HCT116 (cell line): ENCODE measurements at regions of chr3 and their contacts with region 1.

Region 1: GRCh38 chr3:113287803-113288648 is 76.7 kb downstream of the BOC start:
- DNase-seq: peak; percentile 57
- ATAC-seq: peak; percentile 66
- H3K4me3 ChIP-seq: no peak overlapping the region
- H3K27ac ChIP-seq: no peak overlapping the region
- H3K4me1 ChIP-seq: peaks cover 8 to 11% of the 10 kb centered on the region in 2 experiments; a peak in 3 of 4 replicates
- H3K27me3 ChIP-seq: no peaks in the 10 kb centered on the region
- CTCF ChIP-seq: peak; percentile 94 to 97 (median 97)
- POLR2A ChIP-seq: no peak
- RAD21 ChIP-seq: peak; percentile 96

Region 2: GRCh38 chr3:113035387-113035982 is 252.5 kb before region 1 on chr3:
- CTCF ChIA-PET with region 1: interaction called, 11 read pairs
- POLR2A ChIA-PET with region 1: no interaction called
- RAD21 ChIA-PET with region 1: interaction called in 1 of 2 experiments, 3 read pairs
- intact Hi-C with region 1: no loop called
- DNase-seq: peak; percentile 50
- ATAC-seq: peak; percentile 99
- H3K4me3 ChIP-seq: no peak overlapping the region
- H3K27ac ChIP-seq: no peak overlapping the region
- H3K4me1 ChIP-seq: no peaks in the 10 kb centered on the region
- H3K27me3 ChIP-seq: no peaks in the 10 kb centered on the region
- CTCF ChIP-seq: peak; percentile 49 to 89 (median 82); a peak in 5 of 6 replicates
- POLR2A ChIP-seq: no peak
- RAD21 ChIP-seq: peak; percentile 62

Region 3: GRCh38 chr3:113051302-113051711 is 236.7 kb before region 1 on chr3:
- CTCF ChIA-PET with region 1: interaction called, 17 read pairs
- POLR2A ChIA-PET with region 1: no interaction called
- RAD21 ChIA-PET with region 1: no interaction called
- intact Hi-C with region 1: loop called (anchors 1 kb)
- DNase-seq: peak; percentile 71
- ATAC-seq: peak; percentile 96
- H3K4me3 ChIP-seq: no peak overlapping the region
- H3K27ac ChIP-seq: no peak overlapping the region
- H3K4me1 ChIP-seq: peaks cover 3 to 8% of the 10 kb centered on the region in 2 experiments; a peak in 2 of 4 replicates
- H3K27me3 ChIP-seq: no peaks in the 10 kb centered on the region
- CTCF ChIP-seq: peak; percentile 79 to 95 (median 91)
- POLR2A ChIP-seq: no peak
- RAD21 ChIP-seq: peak; percentile 96

Region 4: GRCh38 chr3:113136071-113136470 is 152.0 kb before region 1 on chr3:
- CTCF ChIA-PET with region 1: interaction called, 42 read pairs
- POLR2A ChIA-PET with region 1: no interaction called
- RAD21 ChIA-PET with region 1: no interaction called
- intact Hi-C with region 1: loop called (anchors 1 kb)
- DNase-seq: peak; percentile 16
- ATAC-seq: peak; percentile 64
- H3K4me3 ChIP-seq: no peak overlapping the region
- H3K27ac ChIP-seq: no peak overlapping the region
- H3K4me1 ChIP-seq: no peaks in the 10 kb centered on the region
- H3K27me3 ChIP-seq: no peaks in the 10 kb centered on the region
- CTCF ChIP-seq: peak; percentile 45 to 62 (median 55); a peak in 5 of 6 replicates
- POLR2A ChIP-seq: no peak
- RAD21 ChIP-seq: peak; percentile 68

Region 5: DNA sequence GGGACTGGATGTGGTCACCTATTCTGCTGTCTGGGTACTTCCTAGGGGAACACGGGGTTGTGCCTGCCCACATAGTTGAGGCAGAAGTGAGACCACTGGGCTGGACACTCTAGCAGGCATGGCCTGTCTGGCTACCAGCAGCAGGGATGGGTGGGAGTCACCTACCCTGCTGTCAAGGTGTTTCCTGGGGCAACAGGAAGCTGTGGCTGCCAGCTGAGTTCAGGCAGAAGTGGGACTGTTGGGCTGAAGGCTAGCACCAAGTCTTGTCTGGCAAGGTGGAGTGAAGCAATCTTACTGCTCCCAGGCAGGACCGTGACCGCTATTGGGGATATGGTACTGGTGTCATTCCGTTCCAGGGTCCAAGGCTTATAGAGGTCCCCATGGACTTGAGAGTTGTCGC is 639.5 kb after region 1 on chr3:
- CTCF ChIA-PET with region 1: no interaction called
- POLR2A ChIA-PET with region 1: no interaction called
- RAD21 ChIA-PET with region 1: no interaction called
- intact Hi-C with region 1: no loop called
- DNase-seq: no peak
- ATAC-seq: no peak
- H3K4me3 ChIP-seq: no peak overlapping the region
- H3K27ac ChIP-seq: no peak overlapping the region
- H3K4me1 ChIP-seq: no peaks in the 10 kb centered on the region
- H3K27me3 ChIP-seq: no peaks in the 10 kb centered on the region
- CTCF ChIP-seq: no peak
- POLR2A ChIP-seq: no peak
- RAD21 ChIP-seq: no peak

Region 6: DNA sequence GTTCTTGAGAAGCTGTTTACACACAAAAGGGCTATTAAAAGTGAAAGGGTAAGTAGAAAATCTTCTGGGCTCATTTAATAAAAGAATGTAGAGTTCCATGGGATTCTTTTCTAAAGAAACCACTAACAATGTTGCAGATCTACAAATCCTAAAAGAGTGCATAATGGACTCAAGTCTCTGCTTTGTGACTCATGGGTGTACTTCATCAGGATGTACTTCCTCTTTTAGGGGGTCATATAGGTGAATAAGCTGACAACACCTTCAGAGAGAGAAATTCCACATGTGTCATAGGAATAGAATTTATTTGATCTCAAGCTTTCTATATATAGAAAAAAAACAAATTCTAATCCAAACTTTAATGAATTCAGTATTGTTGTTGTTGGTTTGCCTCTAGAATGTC is 1361.3 kb after region 1 on chr3:
- CTCF ChIA-PET with region 1: no interaction called
- POLR2A ChIA-PET with region 1: no interaction called
- RAD21 ChIA-PET with region 1: no interaction called
- intact Hi-C with region 1: no loop called
- DNase-seq: peak; percentile 97
- ATAC-seq: peak; percentile 74
- H3K4me3 ChIP-seq: peak overlapping the region in 1 of 2 experiments; percentile 11; a peak in 1 of 4 replicates
- H3K27ac ChIP-seq: peak overlapping the region; percentile 97
- H3K4me1 ChIP-seq: peaks cover 79 to 95% of the 10 kb centered on the region in 2 experiments
- H3K27me3 ChIP-seq: no peaks in the 10 kb centered on the region
- CTCF ChIP-seq: no peak
- POLR2A ChIP-seq: no peak
- RAD21 ChIP-seq: no peak; the same call in none of the 2 replicates